ENCODE measurements at regions of chr6 and their contacts with region 1.

Region 1: GRCh38 chr6:20534295-20535262 is at the start of gene CDKAL1:
- DNase-seq: peak; percentile 89
- ATAC-seq: peak; percentile 98
- H3K4me3 ChIP-seq: peak within 1 kb of the TSS; percentile 97
- H3K27ac ChIP-seq: peak within 1 kb of the TSS; percentile 88
- H3K4me1 ChIP-seq: peaks cover 5% of the 10 kb centered on the region
- H3K27me3 ChIP-seq: no peaks in the 10 kb centered on the region
- CTCF ChIP-seq: no peak
- total RNA-seq, gene CDKAL1: 16.0 TPM

Region 2: DNA sequence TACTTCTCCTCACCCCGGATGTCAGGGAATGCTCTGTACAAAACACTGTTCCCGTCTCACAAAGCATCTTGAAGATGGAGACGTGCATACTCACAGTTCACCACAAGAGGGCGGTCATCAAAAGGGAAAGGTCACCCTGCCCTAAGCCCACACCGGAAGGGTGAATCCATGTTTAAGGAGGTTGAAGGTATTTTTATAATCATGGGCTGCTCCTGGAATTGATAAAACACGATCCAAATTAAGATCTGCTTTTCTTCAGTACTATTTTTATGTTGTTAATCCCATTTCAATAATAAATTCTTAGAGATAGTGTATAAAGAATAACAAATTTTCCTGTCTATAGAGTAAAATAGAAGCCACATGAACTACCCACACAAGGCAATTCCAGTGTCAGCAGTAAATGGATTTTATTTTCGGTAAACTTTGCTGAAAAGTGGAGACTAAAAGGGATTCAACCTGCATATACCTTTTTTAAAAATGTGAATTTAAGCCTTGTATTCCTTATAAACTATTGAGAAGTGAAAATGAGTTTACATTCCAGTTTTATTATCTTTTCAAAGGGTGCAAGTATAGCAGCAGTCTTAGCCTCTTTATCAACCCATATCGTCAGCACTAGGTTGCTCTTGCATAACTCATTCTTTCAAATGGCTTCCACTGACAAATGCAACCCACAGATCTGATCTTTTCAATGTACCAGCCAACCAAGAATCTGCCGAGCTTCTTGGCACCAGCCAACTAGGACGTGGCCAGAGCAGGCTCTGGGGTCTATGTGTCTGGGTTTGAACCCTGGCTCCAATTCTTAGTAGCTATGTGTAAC is 242.6 kb before region 1 on chr6:
- intact Hi-C with region 1: loop called (anchors 5 kb)
- DNase-seq: no peak
- ATAC-seq: peak; percentile 99
- H3K4me3 ChIP-seq: no peak overlapping the region
- H3K27ac ChIP-seq: no peak overlapping the region
- H3K4me1 ChIP-seq: no peaks in the 10 kb centered on the region
- H3K27me3 ChIP-seq: no peaks in the 10 kb centered on the region
- CTCF ChIP-seq: peak; percentile 96

Region 3: GRCh38 chr6:20438462-20439070 is 96.0 kb before region 1 on chr6:
- intact Hi-C with region 1: no loop called
- DNase-seq: no peak
- ATAC-seq: no peak
- H3K4me3 ChIP-seq: no peak overlapping the region
- H3K27ac ChIP-seq: no peak overlapping the region
- H3K4me1 ChIP-seq: no peaks in the 10 kb centered on the region
- H3K27me3 ChIP-seq: no peaks in the 10 kb centered on the region
- CTCF ChIP-seq: no peak